ENCODE measurements at regions of chr2 and their contacts with region 1.

Region 1: GRCh38 chr2:96638144-96639121 is at the start of gene KANSL3:
- DNase-seq: peak; percentile 92
- H3K4me3 Mint-ChIP-seq: peak within 1 kb of the TSS; percentile 93
- H3K27ac Mint-ChIP-seq: peak within 1 kb of the TSS; percentile 85
- H3K4me1 Mint-ChIP-seq: peaks cover 31% of the 10 kb centered on the region
- H3K27me3 Mint-ChIP-seq: no peaks in the 10 kb centered on the region
- total RNA-seq, gene KANSL3: 33.0 to 37.5 TPM

Region 2: DNA sequence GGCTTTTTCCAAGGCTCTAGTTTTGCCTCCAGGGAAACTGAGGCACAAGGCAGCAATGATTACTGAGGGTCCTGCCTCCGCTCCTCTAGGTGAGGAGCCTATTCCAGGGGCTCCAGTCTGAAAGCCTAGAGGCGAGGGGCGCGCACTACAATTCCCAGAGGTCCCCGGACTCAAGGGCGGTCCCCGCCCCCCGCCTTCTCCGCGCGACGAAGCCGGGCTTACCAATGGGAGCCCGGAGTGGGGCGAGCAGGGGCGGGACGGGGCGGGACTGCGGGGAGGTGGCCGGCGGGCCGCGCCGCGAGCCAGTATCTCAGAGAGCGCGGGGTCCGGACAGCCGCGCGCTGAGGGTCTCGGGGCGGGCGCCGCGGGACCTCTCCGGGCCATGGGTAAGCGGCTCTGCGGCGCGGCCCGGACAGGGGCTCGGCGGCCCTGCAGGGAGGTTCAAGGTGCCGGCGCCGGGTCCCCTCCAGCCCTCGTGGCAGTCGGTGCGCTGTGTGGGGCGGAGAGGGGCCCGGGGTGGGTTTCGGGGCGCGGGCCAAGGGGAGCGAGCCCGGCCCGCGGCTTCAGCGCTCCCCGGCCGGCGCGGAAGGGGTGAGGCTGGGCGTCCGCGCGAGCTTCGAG is 101.9 kb before region 1 on chr2 and contains the start of gene ARID5A:
- CTCF ChIA-PET with region 1: no interaction called
- intact Hi-C with region 1: loop called (anchors 5 kb)
- DNase-seq: peak; percentile 96
- H3K4me3 Mint-ChIP-seq: peak within 1 kb of the TSS; percentile 96
- H3K27ac Mint-ChIP-seq: peak within 1 kb of the TSS; percentile 99
- H3K4me1 Mint-ChIP-seq: peaks cover 60% of the 10 kb centered on the region
- H3K27me3 Mint-ChIP-seq: no peaks in the 10 kb centered on the region
- total RNA-seq, gene ARID5A: 349 to 351 TPM

Region 3: DNA sequence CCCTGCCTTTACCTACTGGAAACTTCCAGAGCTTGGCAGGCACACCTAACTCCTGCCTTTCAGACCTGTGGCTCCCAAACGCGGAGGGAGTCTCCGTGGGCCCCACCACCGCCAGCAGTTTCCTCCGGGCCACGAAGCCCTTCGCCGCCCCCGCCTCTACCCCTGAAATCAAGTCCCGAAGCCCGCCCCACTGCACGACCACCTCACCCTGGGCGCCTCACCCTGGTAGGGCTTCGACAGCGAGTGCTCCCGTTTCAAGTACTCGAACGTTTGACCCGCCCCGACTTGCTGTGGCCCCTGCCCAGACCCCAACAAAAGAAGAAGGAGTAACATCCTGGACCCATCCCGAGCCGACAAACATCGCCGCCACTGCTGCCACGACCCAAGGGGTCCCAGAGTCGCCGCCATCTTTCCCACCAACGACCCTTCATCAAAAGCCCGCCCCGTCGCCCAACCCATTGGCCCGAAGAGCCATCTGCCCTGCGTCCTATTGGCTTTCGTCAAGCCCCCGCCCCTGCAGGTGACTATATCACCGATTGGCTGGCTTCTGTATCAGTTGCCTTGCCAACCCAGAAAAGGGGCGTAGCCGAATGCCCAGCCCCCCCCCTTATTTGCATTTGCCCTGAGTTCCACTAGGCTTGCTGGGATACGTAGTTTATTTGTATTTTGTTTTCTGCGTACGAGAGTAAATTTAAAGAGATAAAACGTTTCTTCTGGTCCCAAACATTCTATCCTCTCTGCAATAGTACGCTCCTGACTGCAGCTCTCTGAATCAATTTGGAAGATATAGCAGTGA is 101.4 kb after region 1 on chr2 and contains the start of gene LMAN2L:
- CTCF ChIA-PET with region 1: interaction called, 4 read pairs
- intact Hi-C with region 1: loop called (anchors 1 kb)
- DNase-seq: peak; percentile 99
- H3K4me3 Mint-ChIP-seq: peak within 1 kb of the TSS; percentile 97
- H3K27ac Mint-ChIP-seq: peak within 1 kb of the TSS; percentile 77
- H3K4me1 Mint-ChIP-seq: peaks cover 33% of the 10 kb centered on the region
- H3K27me3 Mint-ChIP-seq: no peaks in the 10 kb centered on the region
- total RNA-seq, gene LMAN2L: 4.0 to 4.8 TPM

Region 4: DNA sequence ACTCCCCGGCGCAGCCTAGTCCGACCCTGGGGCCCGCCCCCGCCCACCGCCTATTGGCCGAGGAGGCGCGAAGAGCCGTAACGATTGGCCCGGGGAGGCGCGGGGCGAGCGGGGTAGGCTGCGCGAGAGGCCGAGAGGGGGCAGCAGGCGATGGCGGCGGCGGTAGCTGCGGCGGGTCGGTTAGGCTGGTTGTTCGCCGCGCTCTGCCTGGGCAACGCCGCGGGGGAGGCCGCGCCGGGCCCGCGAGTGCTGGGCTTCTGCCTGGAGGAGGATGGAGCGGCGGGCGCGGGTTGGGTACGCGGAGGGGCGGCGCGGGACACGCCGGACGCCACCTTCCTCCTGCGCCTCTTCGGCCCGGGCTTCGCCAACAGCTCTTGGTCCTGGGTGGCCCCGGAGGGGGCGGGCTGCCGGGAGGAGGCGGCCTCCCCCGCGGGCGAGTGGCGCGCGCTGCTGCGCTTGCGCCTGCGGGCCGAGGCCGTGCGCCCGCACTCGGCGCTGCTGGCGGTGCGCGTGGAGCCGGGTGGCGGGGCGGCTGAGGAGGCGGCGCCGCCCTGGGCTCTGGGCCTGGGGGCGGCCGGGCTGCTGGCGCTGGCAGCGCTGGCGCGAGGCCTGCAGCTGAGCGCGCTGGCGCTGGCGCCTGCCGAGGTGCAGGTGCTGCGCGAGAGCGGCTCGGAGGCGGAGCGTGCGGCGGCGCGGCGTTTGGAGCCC is 177.8 kb after region 1 on chr2 and contains the start of gene CNNM3:
- CTCF ChIA-PET with region 1: no interaction called
- intact Hi-C with region 1: loop called (anchors 1 kb)
- DNase-seq: peak; percentile 97
- H3K4me3 Mint-ChIP-seq: peak within 1 kb of the TSS; percentile 77
- H3K27ac Mint-ChIP-seq: peak within 1 kb of the TSS; percentile 40
- H3K4me1 Mint-ChIP-seq: peaks cover 54% of the 10 kb centered on the region
- H3K27me3 Mint-ChIP-seq: no peaks in the 10 kb centered on the region
- total RNA-seq, gene CNNM3: 17.3 to 19.9 TPM